ENCODE measurements at regions of chr12 and their contacts with region 1.

Region 1: DNA sequence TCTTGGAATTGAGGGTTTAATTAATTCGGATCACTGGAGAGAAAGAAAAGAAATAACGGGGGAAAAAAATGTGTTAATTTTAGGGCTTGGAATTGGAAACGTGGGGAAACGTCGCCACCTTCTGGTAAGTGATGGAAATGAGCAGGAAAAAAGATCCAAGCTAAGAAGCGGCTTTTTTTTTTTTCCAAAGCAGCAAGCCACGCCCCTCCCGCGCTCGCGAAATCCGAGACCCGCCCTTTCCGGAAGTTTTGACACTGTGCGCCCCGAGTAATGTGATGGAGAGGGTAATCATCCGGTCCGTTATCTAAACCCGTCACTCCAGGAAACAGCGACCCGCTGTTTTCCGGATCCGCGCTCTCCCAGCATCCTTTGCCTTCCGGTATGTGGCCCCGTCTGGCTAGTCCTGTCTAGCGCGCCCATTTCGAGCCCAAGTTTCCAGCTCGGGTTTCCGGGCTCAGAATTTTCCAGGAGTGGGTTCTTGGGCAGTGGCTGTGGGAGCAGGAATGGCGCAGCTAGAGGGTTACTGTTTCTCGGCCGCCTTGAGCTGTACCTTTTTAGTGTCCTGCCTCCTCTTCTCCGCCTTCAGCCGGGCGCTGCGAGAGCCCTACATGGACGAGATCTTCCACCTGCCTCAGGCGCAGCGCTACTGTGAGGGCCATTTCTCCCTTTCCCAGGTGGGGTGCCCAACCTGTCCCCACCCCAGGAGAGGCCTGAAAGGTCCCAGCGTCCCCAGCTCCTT is at the start of gene ALG10B:
- DNase-seq: peak; percentile 89
- H3K4me3 Mint-ChIP-seq: peak within 1 kb of the TSS; percentile 86
- H3K27ac Mint-ChIP-seq: peak within 1 kb of the TSS; percentile 86
- H3K4me1 Mint-ChIP-seq: peaks cover 21% of the 10 kb centered on the region
- H3K27me3 Mint-ChIP-seq: no peaks in the 10 kb centered on the region
- CTCF ChIP-seq: no peak
- total RNA-seq, gene ALG10B: 11.2 and 12.6 TPM in 2 replicates

Region 2: DNA sequence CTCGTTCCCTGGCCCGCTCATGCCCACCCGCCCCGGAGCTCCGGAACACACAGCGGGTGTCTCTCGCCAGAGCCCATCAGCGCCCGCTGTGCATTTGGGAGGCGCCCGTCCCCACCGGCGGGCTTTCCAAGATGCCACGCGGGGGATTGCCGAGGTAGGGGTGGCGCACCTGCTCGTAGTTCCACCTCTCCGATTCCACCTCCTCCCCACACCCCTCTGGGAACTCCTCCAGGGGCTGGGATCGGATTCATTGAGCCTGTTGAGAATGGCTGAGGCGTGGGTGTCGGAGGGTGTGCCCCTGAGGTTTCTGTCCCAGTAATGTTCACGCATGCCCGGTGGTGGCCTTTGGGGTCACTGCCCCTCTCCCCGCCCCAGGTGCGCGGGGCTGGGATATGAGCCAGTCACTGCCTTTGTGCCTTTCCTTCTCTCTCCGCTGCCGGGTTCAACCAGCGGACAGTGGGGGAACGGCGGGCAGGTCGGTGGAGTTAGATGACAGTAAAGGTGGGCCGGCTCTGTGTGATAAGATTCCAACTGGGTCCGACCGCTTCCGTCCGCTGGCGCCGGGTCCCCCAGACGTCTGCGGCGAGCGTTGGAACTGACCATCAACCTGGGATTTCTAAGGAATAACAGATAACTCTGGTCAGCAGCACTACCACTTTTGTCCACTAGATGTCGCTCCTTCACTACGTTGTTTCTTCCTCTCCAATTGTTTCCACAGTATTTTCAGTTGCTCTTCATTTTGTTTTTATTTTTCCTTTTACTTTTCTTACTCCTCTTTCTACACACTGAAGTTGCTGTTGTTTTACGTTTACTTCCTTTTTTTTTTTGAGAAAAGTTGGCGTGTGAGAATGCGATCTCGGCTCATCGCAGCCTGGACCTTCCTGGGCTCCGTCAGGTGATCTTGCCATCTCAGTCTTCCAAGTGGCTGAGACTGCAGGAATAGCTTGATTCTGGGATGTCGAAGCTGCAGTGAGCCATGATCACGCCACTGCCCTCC is 178.0 kb before region 1 on chr12:
- CTCF ChIA-PET with region 1: interaction called, 6 read pairs
- intact Hi-C with region 1: loop called (anchors 1 kb)
- DNase-seq: peak; percentile 80
- H3K4me3 Mint-ChIP-seq: peak overlapping the region; percentile 68
- H3K27ac Mint-ChIP-seq: peak overlapping the region; percentile 67
- H3K4me1 Mint-ChIP-seq: peaks cover 10% of the 10 kb centered on the region
- H3K27me3 Mint-ChIP-seq: no peaks in the 10 kb centered on the region
- CTCF ChIP-seq: peak; percentile 57